ENCODE measurements at regions of chr2 and their contacts with region 1.

Region 1: GRCh38 chr2:240566203-240567136 is 1.8 kb upstream of the RNPEPL1 start:
- DNase-seq: peak; percentile 84 to 99
- H3K4me3 ChIP-seq: peak overlapping the region; percentile 67
- H3K27ac ChIP-seq: peak overlapping the region; percentile 100
- H3K4me1 ChIP-seq: peaks cover 71% of the 10 kb centered on the region
- H3K27me3 ChIP-seq: no peaks in the 10 kb centered on the region
- CTCF ChIP-seq: peak; percentile 90

Region 2: GRCh38 chr2:240021488-240022104 is 544.9 kb before region 1 on chr2:
- CTCF ChIA-PET with region 1: no interaction called
- POLR2A ChIA-PET with region 1: interaction called, 10 read pairs
- intact Hi-C with region 1: no loop called
- DNase-seq: peak; percentile 47 to 75
- H3K4me3 ChIP-seq: no peak overlapping the region
- H3K27ac ChIP-seq: no peak overlapping the region
- H3K4me1 ChIP-seq: peaks cover 17% of the 10 kb centered on the region
- H3K27me3 ChIP-seq: no peaks in the 10 kb centered on the region
- CTCF ChIP-seq: peak; percentile 89

Region 3: GRCh38 chr2:240250985-240251847 is 315.3 kb before region 1 on chr2:
- CTCF ChIA-PET with region 1: no interaction called
- POLR2A ChIA-PET with region 1: no interaction called
- intact Hi-C with region 1: loop called (anchors 5 kb)
- DNase-seq: peak; percentile 92 to 98
- H3K4me3 ChIP-seq: peak overlapping the region; percentile 48; the same call in 1 of the 2 replicates
- H3K27ac ChIP-seq: peak overlapping the region; percentile 86
- H3K4me1 ChIP-seq: peaks cover 39% of the 10 kb centered on the region
- H3K27me3 ChIP-seq: no peaks in the 10 kb centered on the region
- CTCF ChIP-seq: no peak

Region 4: GRCh38 chr2:240319855-240320203 is 246.6 kb before region 1 on chr2:
- CTCF ChIA-PET with region 1: no interaction called
- POLR2A ChIA-PET with region 1: no interaction called
- intact Hi-C with region 1: no loop called
- DNase-seq: no peak
- H3K4me3 ChIP-seq: no peak overlapping the region
- H3K27ac ChIP-seq: no peak overlapping the region
- H3K4me1 ChIP-seq: no peaks in the 10 kb centered on the region
- H3K27me3 ChIP-seq: peaks cover 86% of the 10 kb centered on the region
- CTCF ChIP-seq: no peak

Region 5: GRCh38 chr2:240513549-240514287 is 52.8 kb before region 1 on chr2:
- CTCF ChIA-PET with region 1: interaction called, 15 read pairs
- POLR2A ChIA-PET with region 1: interaction called, 4 read pairs
- intact Hi-C with region 1: loop called (anchors 5 kb)
- DNase-seq: peak; percentile 71 to 87
- H3K4me3 ChIP-seq: no peak overlapping the region
- H3K27ac ChIP-seq: no peak overlapping the region
- H3K4me1 ChIP-seq: no peaks in the 10 kb centered on the region
- H3K27me3 ChIP-seq: no peaks in the 10 kb centered on the region
- CTCF ChIP-seq: peak; percentile 93

Region 6: DNA sequence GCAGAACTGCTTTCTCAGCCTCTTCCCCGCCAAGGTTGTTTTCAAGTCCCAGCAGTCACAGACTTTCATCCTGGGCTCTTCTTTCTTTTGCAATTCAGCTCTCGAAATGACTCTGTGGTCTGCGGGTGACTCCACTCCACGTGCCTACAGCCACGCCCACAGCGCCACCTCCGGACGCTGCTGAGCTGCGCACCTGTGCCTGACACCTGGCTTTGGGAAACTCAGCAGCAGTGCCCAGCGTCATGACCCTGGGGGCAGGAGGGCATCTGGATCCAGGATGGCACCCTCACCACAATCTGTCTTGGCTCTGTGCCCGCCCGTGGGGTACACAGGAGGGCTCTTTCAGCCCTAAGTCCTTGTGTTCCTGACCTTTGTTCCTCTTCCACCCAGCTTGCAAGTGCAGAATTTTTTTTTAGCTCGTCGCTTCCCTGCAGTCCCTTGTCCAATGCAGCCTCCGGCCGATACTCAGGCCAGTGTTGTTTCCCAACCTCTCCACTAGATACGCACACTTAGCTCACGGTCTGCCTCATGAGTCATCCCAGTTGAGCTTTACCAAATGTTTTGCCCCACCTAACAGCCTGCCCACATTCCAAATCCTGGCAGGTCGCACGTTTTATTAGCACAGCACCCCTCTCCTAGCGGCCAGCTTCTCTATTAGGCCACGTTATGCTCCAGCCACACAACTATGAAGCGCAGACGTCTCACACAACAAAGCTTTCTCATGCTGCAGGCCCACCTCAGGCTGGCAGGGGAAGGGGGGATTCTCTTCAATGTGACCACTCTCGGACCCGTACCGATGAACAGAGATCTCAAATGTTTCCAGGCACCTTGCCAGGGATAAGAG is 13.5 kb after region 1 on chr2:
- CTCF ChIA-PET with region 1: interaction called, 34 read pairs
- POLR2A ChIA-PET with region 1: interaction called, 24 read pairs
- intact Hi-C with region 1: loop called (anchors 1 kb)
- DNase-seq: peak; percentile 97 to 99
- H3K4me3 ChIP-seq: peak overlapping the region; percentile 46; the same call in 1 of the 2 replicates
- H3K27ac ChIP-seq: peak overlapping the region; percentile 98
- H3K4me1 ChIP-seq: peaks cover 60% of the 10 kb centered on the region
- H3K27me3 ChIP-seq: no peaks in the 10 kb centered on the region
- CTCF ChIP-seq: peak; percentile 97

Region 7: DNA sequence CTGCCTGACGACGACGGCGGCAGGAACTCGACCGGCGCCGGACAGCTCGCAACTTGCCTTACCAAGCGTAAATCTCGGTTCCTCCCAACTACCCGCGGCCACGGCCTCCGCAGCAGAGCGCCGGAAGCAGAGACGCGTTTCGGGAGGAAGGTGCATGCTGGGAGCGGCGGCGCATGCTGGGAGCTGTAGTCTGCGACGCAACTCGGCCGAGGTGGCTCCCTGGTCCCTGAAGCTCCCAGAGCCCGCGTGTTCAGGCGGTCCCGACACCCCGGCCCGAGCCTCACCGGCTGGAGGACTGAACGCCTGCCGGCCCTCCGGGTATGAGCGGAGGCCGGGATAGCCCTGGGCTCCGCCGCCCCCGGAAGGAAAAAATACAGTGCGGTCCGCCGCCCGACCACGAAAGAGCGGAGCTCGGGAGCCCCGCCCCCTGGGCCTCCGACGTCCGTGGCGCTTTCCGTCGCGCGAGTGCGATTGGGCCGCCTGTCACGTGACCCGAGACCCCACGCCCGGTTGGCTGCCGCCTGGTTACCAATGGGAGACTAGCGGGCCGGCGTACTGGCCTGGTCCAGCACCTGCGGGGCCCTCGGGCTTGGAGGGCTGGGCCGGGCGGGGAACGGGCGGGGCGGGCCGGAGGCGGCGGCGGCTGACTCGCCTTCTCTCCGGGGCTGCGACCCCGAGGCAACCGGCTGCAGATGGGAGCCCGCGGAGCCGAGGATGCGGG is 19.9 kb after region 1 on chr2 and contains the start of gene CAPN10:
- CTCF ChIA-PET with region 1: interaction called, 22 read pairs
- POLR2A ChIA-PET with region 1: interaction called, 48 read pairs
- intact Hi-C with region 1: loop called (anchors 1 kb)
- DNase-seq: peak; percentile 93 to 100
- H3K4me3 ChIP-seq: peak within 1 kb of the TSS; percentile 83
- H3K27ac ChIP-seq: peak within 1 kb of the TSS; percentile 61
- H3K4me1 ChIP-seq: peaks cover 40% of the 10 kb centered on the region
- H3K27me3 ChIP-seq: no peaks in the 10 kb centered on the region
- CTCF ChIP-seq: no peak
- total RNA-seq, gene CAPN10: 49.8 and 70.3 TPM in 2 replicates

Region 8: DNA sequence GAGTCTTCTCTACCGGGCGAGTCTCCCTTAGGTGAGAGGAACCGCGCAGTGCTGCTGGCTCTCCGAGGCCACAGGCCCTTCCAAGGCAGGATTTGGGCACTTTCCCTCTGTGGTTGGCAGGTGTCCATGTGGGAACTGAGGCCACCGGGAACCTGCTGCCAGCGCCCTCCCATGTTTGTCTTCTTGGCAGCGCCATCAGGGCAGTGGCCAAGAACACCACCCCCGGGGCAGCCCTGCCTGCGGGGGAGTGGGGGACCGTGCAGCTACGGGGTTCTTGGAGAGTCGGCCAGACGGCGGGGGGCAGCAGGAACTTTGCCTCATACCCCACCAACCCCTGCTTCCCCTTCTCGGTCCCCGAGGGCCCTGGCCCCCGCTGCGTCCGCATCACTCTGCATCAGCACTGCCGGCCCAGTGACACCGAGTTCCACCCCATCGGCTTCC is 30.0 kb after region 1 on chr2:
- CTCF ChIA-PET with region 1: no interaction called
- POLR2A ChIA-PET with region 1: no interaction called
- intact Hi-C with region 1: no loop called
- DNase-seq: no peak
- H3K4me3 ChIP-seq: no peak overlapping the region
- H3K27ac ChIP-seq: no peak overlapping the region
- H3K4me1 ChIP-seq: no peaks in the 10 kb centered on the region
- H3K27me3 ChIP-seq: no peaks in the 10 kb centered on the region
- CTCF ChIP-seq: no peak

Region 9: GRCh38 chr2:240840435-240841080 is 274.1 kb after region 1 on chr2:
- CTCF ChIA-PET with region 1: interaction called, 7 read pairs
- POLR2A ChIA-PET with region 1: no interaction called
- intact Hi-C with region 1: loop called (anchors 5 kb)
- DNase-seq: peak; percentile 71 to 88
- H3K4me3 ChIP-seq: no peak overlapping the region
- H3K27ac ChIP-seq: no peak overlapping the region
- H3K4me1 ChIP-seq: no peaks in the 10 kb centered on the region
- H3K27me3 ChIP-seq: peaks cover 87% of the 10 kb centered on the region
- CTCF ChIP-seq: peak; percentile 80

Measured in PC-9 (cell line).